H1 (cell line): ENCODE measurements at regions of chr12 and their contacts with region 1.

Region 1: GRCh38 chr12:47715393-47715876 is 9.6 kb upstream of the RPAP3 start:
- DNase-seq: peak in 1 of 2 experiments; percentile 79
- H3K4me3 ChIP-seq: no peak overlapping the region
- H3K27ac ChIP-seq: no peak overlapping the region
- H3K4me1 ChIP-seq: peaks cover 4 to 9% (median 8%) of the 10 kb centered on the region in 4 experiments; a peak in 5 of 7 replicates
- H3K27me3 ChIP-seq: peaks cover 0 to 7% (median 3%) of the 10 kb centered on the region in 4 experiments; a peak in 3 of 7 replicates
- CTCF ChIP-seq: peak in 2 of 3 experiments; percentile 77 to 84; a peak in 3 of 4 replicates
- EP300 ChIP-seq: no peak
- POLR2A ChIP-seq: no peak
- RAD21 ChIP-seq: peak; percentile 84 to 88

Region 2: GRCh38 chr12:47672068-47672467 is 43.4 kb before region 1 on chr12:
- CTCF ChIA-PET with region 1: no interaction called
- POLR2A ChIA-PET with region 1: no interaction called
- DNase-seq: no peak
- H3K4me3 ChIP-seq: no peak overlapping the region
- H3K27ac ChIP-seq: no peak overlapping the region
- H3K4me1 ChIP-seq: no peaks in the 10 kb centered on the region
- H3K27me3 ChIP-seq: no peaks in the 10 kb centered on the region
- CTCF ChIP-seq: no peak
- EP300 ChIP-seq: no peak
- POLR2A ChIP-seq: no peak
- RAD21 ChIP-seq: no peak

Region 3: DNA sequence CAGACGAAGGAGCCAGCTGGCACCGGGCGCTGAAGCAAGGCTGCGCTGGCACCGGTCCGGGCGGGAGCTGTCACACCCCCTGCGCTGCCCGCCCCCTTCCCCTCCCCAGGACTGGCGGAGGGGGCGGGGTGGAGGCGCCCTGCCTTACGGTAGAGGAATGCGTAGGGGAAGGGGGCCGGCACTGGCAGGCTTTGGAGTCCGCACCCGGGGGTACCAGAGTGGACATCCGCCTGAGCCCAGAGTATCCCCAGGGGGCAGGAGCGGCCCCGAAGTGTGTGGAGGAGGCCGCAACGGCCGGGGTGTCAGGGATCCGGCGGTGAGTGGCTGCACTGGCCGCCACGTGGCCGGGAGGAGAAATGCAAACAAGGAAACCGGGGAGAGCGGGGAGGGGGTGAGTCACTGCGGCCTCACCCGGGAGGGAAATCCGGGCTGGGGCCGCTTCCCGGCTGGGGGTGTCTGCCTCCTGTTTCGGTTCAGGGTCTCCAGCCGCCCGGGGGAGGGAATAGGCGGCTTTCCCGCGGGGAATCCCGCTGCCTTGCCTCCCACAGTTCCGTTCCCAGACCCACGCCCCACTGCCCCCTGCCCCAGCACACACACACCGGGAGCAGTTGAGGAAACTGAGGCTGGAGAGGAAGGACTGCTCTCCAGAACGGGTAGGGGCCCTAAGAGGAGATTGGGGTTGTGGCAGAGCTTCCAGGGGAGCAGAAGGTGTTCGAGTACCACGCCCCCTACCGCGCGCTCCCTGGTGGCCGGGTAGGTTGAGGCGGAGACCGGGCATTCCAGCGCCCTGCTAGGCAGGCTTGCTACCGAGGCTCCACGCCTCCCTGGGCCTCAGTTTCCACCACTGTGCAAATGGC is 43.6 kb after region 1 on chr12 and contains the start of gene RAPGEF3:
- CTCF ChIA-PET with region 1: interaction called, 892 read pairs
- POLR2A ChIA-PET with region 1: interaction called, 3 read pairs
- DNase-seq: peak in 1 of 2 experiments; percentile 81
- H3K4me3 ChIP-seq: peak within 1 kb of the TSS; percentile 32 to 72 (median 45)
- H3K27ac ChIP-seq: no peak within 1 kb of the TSS
- H3K4me1 ChIP-seq: peaks cover 6 to 15% (median 10%) of the 10 kb centered on the region in 4 experiments; a peak in 6 of 7 replicates
- H3K27me3 ChIP-seq: peaks cover 0 to 2% (median 0%) of the 10 kb centered on the region in 4 experiments; a peak in 2 of 7 replicates
- CTCF ChIP-seq: peak; percentile 46 to 60 (median 49); a peak in 3 of 4 replicates
- EP300 ChIP-seq: peak in 1 of 2 experiments; percentile 33; a peak in 1 of 3 replicates
- POLR2A ChIP-seq: no peak; a peak in 1 of 3 replicates
- RAD21 ChIP-seq: peak; percentile 29 to 35
- total RNA-seq, gene RAPGEF3: 6.7 and 9.4 TPM in 2 replicates

Region 4: DNA sequence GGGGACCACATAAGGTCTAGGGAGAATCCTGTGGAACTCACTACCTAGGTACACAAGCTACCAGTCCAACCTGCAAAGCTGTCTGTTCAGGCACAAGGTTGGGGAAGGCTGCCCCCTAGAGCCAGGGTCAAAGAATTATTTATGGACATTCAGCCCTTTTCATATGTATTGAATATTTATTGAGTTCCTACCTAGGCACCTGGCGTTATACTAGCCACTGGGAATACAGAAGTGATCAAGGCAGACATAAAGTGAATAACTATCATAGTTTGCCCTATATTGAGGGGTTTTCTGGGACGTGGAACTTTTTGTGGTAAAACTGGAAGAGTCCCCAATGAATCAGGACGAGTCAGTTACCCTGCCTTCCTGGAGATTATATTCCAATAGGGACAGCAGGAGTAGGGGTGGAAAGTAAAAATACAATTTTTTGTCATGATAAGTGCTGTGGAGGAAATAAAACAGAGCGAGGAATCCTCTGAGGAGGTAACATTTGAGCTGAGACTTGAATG is 51.8 kb after region 1 on chr12:
- CTCF ChIA-PET with region 1: interaction called, 2,442 read pairs
- POLR2A ChIA-PET with region 1: interaction called, 4 read pairs
- DNase-seq: peak in 1 of 2 experiments; percentile 77
- H3K4me3 ChIP-seq: no peak overlapping the region
- H3K27ac ChIP-seq: no peak overlapping the region
- H3K4me1 ChIP-seq: peaks cover 3 to 12% (median 9%) of the 10 kb centered on the region in 4 experiments; a peak in 5 of 7 replicates
- H3K27me3 ChIP-seq: no peaks in the 10 kb centered on the region; a peak in 1 of 7 replicates
- CTCF ChIP-seq: peak; percentile 63 to 89 (median 77)
- EP300 ChIP-seq: no peak
- POLR2A ChIP-seq: no peak
- RAD21 ChIP-seq: peak; percentile 83 to 87

Region 5: GRCh38 chr12:47812797-47813510 is 97.5 kb after region 1 on chr12:
- CTCF ChIA-PET with region 1: interaction called, 12 read pairs
- POLR2A ChIA-PET with region 1: no interaction called
- DNase-seq: peak; percentile 81 to 83
- H3K4me3 ChIP-seq: peak overlapping the region; percentile 14 to 55 (median 40); a peak in 7 of 8 replicates
- H3K27ac ChIP-seq: peak overlapping the region; percentile 79
- H3K4me1 ChIP-seq: peaks cover 28 to 72% (median 58%) of the 10 kb centered on the region in 4 experiments
- H3K27me3 ChIP-seq: no peaks in the 10 kb centered on the region
- CTCF ChIP-seq: no peak
- EP300 ChIP-seq: peak in 1 of 2 experiments; percentile 77; a peak in 1 of 3 replicates
- POLR2A ChIP-seq: no peak
- RAD21 ChIP-seq: no peak

Region 6: DNA sequence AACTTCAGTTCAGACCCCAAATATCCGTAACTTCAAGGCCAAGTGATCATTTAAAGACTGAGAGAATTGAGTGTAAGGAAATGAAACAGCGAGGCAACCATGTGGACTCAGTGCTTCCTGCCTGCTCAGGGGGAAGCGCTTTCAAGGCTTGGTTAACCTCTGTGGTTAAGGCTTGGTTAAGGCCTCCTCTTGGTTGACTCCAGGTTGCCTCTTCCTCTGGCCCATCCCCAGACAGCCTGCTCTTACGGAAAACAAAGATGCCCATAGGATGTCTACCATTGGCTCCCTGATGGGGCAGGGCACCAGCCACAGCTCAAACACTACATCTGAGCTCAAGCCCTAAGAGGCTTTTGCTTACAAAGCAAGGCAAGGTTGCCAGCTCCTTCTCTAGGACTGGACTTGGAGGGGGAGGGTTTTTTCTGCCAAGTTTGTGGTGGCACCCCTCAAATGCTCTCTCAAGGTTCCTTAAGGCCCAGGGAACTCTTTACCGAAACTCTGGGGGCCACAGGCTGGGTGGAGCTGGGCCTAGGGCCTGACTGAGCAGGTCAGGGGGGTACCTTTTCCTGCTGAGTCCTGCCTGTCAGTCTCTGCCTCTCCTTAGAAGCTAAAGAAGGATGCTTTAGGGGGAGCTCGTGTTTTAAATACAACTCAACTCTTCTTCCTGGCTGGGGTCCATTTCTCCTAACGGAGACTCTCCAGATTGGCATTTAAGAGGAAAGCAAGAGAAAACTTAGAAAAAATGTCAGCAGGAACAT is 275.1 kb after region 1 on chr12:
- CTCF ChIA-PET with region 1: no interaction called
- POLR2A ChIA-PET with region 1: no interaction called
- DNase-seq: no peak
- H3K4me3 ChIP-seq: no peak overlapping the region
- H3K27ac ChIP-seq: no peak overlapping the region
- H3K4me1 ChIP-seq: peaks cover 0 to 7% (median 3%) of the 10 kb centered on the region in 4 experiments; a peak in 4 of 7 replicates
- H3K27me3 ChIP-seq: peaks cover 0 to 21% (median 6%) of the 10 kb centered on the region in 4 experiments; a peak in 4 of 7 replicates
- CTCF ChIP-seq: no peak
- EP300 ChIP-seq: no peak
- POLR2A ChIP-seq: no peak
- RAD21 ChIP-seq: peak in 1 of 2 experiments; percentile 18; a peak in 1 of 4 replicates